ENCODE measurements at regions of chr3 and their contacts with region 1.

Region 1: DNA sequence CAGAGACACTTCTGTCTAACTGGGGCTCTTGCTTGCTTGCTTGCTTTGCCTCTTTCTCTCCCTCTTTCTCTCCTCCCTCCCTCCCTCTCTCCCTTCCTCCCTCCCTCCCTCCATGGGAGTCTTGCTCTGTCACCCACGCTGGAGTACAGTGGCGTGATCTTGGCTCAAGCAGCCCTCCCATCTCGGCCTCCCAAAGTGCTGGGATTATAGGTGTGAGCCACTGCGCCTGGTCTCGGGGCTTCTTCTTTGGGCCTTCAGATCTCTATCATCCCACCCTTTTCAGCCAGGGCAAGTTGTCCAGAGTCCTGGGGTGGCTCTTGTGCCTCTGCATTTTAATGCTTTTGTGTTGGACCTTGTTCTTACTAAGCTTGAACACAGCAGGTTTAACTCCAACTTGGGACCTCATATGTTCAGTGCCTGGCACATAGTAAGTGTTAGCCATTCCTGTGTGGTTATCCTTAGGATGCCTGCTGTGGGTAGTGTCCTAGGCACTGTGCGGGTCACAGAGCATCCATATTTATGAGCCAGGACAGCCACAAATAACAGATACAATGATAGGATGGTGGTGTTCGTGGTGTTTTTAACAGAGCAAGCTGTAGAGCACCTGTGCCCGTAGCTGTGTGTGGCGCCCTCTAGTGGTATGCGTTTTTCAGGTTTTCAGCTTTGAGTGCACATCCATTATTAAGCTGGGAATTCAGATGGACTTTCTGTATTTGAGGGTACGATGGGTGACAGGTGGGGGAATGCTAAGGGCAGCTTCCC is 75.1 kb downstream of the CCK start:
- DNase-seq: peak in 8 of 10 donors; percentile 46 to 88 (median 74)
- H3K4me3 ChIP-seq: no peak overlapping the region
- H3K27ac ChIP-seq: peak overlapping the region in 26 of 59 donors; percentile 2 to 76 (median 42)
- H3K27me3 ChIP-seq: no peaks in the 10 kb centered on the region
- CTCF ChIP-seq: peak; percentile 59 to 94 (median 86)

Region 2: DNA sequence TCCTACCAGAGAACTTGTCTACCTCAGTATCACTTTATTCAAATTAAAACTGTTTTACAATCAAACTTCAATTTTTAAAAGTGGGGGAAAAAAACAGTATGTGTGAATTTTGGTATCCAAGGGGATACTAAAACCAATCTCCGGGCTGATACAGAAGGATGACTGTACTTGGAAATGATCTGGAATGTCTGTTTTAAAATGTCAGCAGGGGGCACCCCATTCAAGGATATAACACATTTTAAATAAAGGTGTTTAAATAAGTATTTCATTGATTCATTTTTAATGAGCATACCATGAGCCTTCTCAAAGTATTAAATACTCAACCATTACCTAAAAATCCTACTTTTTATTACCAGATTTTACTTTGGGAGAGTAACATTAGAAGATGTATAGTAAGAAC is 296.9 kb before region 1 on chr3:
- intact Hi-C with region 1: loop called in 1 of 2 experiments (anchors 10 kb)
- DNase-seq: peak in 1 of 10 donors; percentile 22
- H3K4me3 ChIP-seq: no peak overlapping the region
- H3K27ac ChIP-seq: no peak overlapping the region
- H3K27me3 ChIP-seq: no peaks in the 10 kb centered on the region
- CTCF ChIP-seq: peak; percentile 23 to 86 (median 59)

Region 3: GRCh38 chr3:42118762-42119361 is 72.0 kb before region 1 on chr3:
- intact Hi-C with region 1: loop called (anchors 1 to 2 kb)
- DNase-seq: peak in 4 of 10 donors; percentile 49 to 70 (median 57)
- H3K4me3 ChIP-seq: no peak overlapping the region
- H3K27ac ChIP-seq: peak overlapping the region in 13 of 59 donors; percentile 1 to 64 (median 27)
- H3K27me3 ChIP-seq: no peaks in the 10 kb centered on the region
- CTCF ChIP-seq: peak in 55 of 56 donors; percentile 22 to 78 (median 57)

Region 4: GRCh38 chr3:42148982-42149432 is 41.9 kb before region 1 on chr3:
- intact Hi-C with region 1: loop called in 1 of 2 experiments (anchors 1 kb)
- DNase-seq: peak; percentile 73 to 99 (median 96)
- H3K4me3 ChIP-seq: peak overlapping the region; percentile 44 to 80 (median 63)
- H3K27ac ChIP-seq: peak overlapping the region in 58 of 59 donors; percentile 1 to 90 (median 77)
- H3K27me3 ChIP-seq: no peaks in the 10 kb centered on the region
- CTCF ChIP-seq: peak in 10 of 56 donors; percentile 6 to 34 (median 16)

Region 5: DNA sequence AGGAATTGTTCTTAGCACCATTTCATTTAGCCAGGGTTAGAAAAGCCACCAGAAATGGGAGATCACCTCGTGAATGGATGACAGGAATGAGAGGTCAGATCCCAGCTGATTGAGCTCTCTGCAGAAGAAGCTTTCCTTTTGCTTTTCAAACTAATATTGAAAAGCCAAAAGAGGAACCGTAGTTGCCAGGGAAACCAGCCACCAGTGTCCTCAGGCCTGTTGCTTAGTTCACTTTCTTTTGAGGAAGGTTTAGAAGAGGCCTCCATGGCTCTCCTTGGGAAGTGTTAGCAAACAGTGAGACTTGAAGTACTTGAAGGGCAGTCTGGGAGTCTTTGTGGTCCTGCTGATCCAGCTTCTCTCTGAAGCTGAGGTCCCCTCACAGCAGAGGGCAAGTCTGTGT is 82.5 kb after region 1 on chr3:
- intact Hi-C with region 1: no loop called
- DNase-seq: no peak
- H3K4me3 ChIP-seq: no peak overlapping the region
- H3K27ac ChIP-seq: no peak overlapping the region
- H3K27me3 ChIP-seq: no peaks in the 10 kb centered on the region
- CTCF ChIP-seq: no peak